ENCODE measurements at regions of chr15 and their contacts with region 1.

Region 1: DNA sequence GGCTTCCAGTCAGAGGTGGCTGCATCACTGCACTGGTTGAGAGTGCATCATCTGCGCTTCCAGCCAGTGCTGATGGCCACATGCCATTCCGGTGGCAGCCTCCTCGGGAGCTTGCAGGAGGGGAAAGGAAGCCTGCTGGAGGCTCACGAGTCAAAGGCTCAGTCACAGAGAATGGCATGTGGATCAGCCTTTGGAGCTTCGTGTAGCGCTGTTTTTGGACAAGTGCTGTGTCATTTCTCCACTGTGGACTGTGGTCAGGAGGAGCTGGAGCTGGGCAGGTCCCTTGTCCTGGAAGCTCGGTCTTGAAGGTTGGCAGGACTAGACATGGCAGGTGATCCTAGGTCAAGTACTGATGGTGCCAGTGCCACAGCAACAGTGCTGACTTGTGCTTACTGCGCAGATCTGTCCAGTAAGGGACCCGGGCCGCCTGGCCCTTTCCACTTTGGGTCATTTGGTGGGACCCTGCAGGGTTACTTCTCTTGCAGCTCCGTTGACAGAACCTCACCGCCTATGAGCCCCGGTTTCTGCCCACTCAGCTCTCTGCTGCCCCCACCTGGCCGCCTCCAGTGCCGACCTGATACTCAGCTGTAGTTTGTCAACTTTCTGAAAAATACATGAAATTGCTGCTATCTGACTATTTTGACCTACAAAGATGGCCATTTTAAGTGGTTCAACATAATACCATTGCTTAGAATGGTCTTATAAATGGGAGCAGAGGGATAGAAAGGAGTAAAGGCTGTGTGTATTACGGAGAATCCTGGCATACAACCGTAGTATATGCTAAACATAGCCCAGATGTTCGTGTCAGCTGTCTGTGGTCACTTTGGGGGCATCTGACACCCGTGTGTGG is 27.6 kb upstream of the TRPM1 start:
- DNase-seq: peak; percentile 78
- H3K4me3 ChIP-seq: no peak overlapping the region
- H3K27ac ChIP-seq: no peak overlapping the region
- H3K4me1 ChIP-seq: peaks cover 4% of the 10 kb centered on the region
- H3K27me3 ChIP-seq: peaks cover 0 to 3% of the 10 kb centered on the region in 2 experiments
- CTCF ChIP-seq: peak; percentile 93 to 96
- POLR2A ChIP-seq: no peak

Region 2: GRCh38 chr15:30670056-30670455 is 459.1 kb before region 1 on chr15:
- CTCF ChIA-PET with region 1: interaction called, 16 read pairs
- POLR2A ChIA-PET with region 1: no interaction called
- dilution Hi-C with region 1: no loop called
- intact Hi-C with region 1: no loop called
- DNase-seq: peak; percentile 29
- H3K4me3 ChIP-seq: no peak overlapping the region
- H3K27ac ChIP-seq: peak overlapping the region; percentile 46
- H3K4me1 ChIP-seq: peaks cover 15% of the 10 kb centered on the region
- H3K27me3 ChIP-seq: no peaks in the 10 kb centered on the region
- CTCF ChIP-seq: no peak
- POLR2A ChIP-seq: no peak

Region 3: DNA sequence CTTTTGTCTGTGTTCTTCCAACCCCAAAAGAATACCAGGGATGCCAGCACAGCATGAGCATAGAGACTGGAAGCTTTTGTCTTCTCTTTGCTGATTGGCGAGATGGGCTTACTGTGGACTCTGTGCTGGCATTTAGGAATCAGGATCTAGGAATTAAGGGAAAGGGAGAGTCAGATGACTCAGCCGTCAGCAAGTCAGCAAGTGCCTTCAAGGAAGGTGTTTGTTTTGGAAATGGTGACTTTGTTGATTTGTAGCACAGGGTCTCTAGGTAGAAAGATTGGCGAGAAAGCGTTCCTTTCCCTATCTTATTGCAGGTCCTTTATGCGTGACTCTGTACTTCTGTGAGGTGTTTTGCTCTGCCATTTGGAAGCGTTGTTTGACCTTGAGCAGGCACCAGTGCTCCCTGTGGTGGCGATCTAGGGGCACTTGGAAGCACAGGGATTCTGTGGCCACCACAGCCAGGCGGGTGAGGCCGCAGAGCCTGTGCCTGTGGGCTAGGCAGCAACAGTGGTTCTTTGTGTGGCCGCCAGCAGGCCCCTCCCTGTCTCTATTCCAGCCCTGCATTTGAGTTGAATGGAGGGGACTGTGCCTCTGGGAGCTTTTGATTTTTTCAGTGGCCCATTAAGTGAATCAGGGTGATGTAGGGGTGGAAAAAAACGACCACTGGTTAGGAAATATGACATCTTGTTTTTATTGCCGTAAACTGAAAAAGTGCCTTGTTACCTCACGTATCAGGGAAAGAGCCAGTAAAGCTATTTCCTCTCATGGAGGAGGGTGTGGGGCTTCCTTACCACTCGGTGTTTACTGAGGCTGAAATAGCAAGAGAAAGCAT is 206.4 kb before region 1 on chr15:
- CTCF ChIA-PET with region 1: interaction called, 24 read pairs
- POLR2A ChIA-PET with region 1: no interaction called
- dilution Hi-C with region 1: no loop called
- intact Hi-C with region 1: no loop called
- DNase-seq: peak; percentile 83
- H3K4me3 ChIP-seq: no peak overlapping the region
- H3K27ac ChIP-seq: peak overlapping the region; percentile 60
- H3K4me1 ChIP-seq: peaks cover 18% of the 10 kb centered on the region
- H3K27me3 ChIP-seq: no peaks in the 10 kb centered on the region
- CTCF ChIP-seq: no peak
- POLR2A ChIP-seq: no peak

Region 4: DNA sequence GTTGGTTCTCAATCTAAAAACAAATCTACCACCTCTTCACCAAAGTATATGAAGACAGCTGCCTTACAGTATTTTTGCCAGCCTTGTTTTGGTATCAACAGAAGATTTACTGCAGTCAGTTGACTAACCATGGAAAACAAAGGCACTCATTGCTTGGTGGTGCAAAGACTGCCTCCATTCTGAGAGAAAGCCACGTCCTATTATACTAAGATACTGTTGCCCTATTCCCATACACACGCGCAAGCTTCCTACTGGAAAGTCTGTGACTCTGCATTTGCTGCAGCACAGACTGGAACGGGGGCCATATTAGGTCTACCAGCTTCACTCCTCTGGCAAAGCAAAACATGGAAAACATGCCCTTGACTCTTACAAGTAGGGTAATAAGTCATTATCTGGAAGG is 155.8 kb before region 1 on chr15:
- CTCF ChIA-PET with region 1: interaction called, 129 read pairs
- POLR2A ChIA-PET with region 1: no interaction called
- dilution Hi-C with region 1: no loop called
- intact Hi-C with region 1: no loop called
- DNase-seq: no peak
- H3K4me3 ChIP-seq: no peak overlapping the region
- H3K27ac ChIP-seq: no peak overlapping the region
- H3K4me1 ChIP-seq: no peaks in the 10 kb centered on the region
- H3K27me3 ChIP-seq: no peaks in the 10 kb centered on the region
- CTCF ChIP-seq: no peak
- POLR2A ChIP-seq: no peak

Region 5: GRCh38 chr15:31024330-31024729 is 104.8 kb before region 1 on chr15:
- CTCF ChIA-PET with region 1: interaction called, 18 read pairs
- POLR2A ChIA-PET with region 1: interaction called, 3 read pairs
- dilution Hi-C with region 1: no loop called
- intact Hi-C with region 1: no loop called
- DNase-seq: peak; percentile 97
- H3K4me3 ChIP-seq: no peak overlapping the region
- H3K27ac ChIP-seq: peak overlapping the region; percentile 100
- H3K4me1 ChIP-seq: peaks cover 43% of the 10 kb centered on the region
- H3K27me3 ChIP-seq: no peaks in the 10 kb centered on the region
- CTCF ChIP-seq: no peak
- POLR2A ChIP-seq: peak; percentile 58

Region 6: DNA sequence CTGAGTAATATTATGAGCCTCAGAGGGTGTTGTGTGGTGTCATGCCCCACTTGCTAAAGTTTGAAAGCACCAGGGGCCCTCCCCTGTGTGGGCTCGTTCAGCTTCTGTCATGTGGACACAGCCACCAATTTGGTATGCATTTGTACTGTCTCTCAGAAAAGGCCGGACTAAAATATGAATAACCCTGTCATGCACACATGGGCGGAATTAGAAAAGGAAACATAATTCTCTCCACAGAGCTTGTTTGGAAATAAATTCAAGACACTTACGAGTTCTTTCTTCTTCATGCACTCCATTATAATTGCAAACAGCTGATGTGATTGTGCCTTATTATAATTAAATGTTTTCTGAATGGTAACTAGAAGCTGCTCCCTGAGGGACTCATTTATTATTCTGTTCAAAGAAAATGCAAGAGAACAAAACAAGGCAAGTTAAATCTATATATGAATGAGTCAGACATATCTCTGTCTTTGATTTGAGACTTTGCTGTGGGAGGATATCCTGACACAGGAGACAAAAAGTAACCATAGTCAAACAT is 66.8 kb before region 1 on chr15:
- CTCF ChIA-PET with region 1: no interaction called
- POLR2A ChIA-PET with region 1: no interaction called
- dilution Hi-C with region 1: no loop called
- intact Hi-C with region 1: no loop called
- DNase-seq: peak; percentile 22
- H3K4me3 ChIP-seq: no peak overlapping the region
- H3K27ac ChIP-seq: no peak overlapping the region
- H3K4me1 ChIP-seq: peaks cover 9% of the 10 kb centered on the region
- H3K27me3 ChIP-seq: peaks cover 2 to 6% of the 10 kb centered on the region in 2 experiments
- CTCF ChIP-seq: no peak
- POLR2A ChIP-seq: no peak

Region 7: DNA sequence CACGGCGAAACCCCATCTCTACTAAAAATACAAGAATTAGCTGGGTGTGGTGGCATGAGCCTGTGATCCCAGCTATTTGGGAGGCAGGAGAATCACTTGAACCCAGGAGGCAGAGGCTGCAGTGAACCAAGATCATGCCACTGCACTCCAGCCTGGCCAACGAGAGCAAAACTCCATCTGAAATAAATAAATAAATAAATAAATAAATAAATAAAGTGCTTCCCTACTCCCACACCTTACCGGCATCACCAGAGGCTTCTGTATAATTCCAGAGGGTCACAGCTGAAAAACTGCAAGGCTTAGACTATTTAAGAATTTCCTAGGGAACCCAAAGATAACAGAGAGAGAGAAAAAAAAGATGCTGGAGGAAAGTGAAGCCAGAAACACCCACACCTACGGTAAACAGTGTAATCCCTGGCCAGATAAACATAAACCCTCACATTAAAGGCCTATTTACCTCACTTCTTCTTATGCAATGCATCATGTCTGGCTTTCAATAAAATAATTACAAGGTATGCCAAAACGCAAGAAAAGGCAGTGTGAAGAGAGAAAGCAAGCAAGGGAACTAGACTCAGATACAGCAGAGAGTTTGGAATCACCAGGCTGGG is 12.6 kb before region 1 on chr15:
- CTCF ChIA-PET with region 1: interaction called, 17 read pairs
- POLR2A ChIA-PET with region 1: no interaction called
- dilution Hi-C with region 1: no loop called
- intact Hi-C with region 1: no loop called
- DNase-seq: no peak
- H3K4me3 ChIP-seq: no peak overlapping the region
- H3K27ac ChIP-seq: no peak overlapping the region
- H3K4me1 ChIP-seq: no peaks in the 10 kb centered on the region
- H3K27me3 ChIP-seq: peaks cover 0 to 2% of the 10 kb centered on the region in 2 experiments
- CTCF ChIP-seq: no peak
- POLR2A ChIP-seq: no peak

Measured in endothelial cell of umbilical vein (primary cell).